K562 (cell line): ENCODE measurements at regions of chr5 and their contacts with region 1.

Region 1: GRCh38 chr5:81971712-81972495 is at the start of gene ATG10:
- DNase-seq: peak; percentile 95 to 96 (median 96)
- ATAC-seq: peak; percentile 97
- H3K4me3 ChIP-seq: peak within 1 kb of the TSS; percentile 63
- H3K27ac ChIP-seq: peak within 1 kb of the TSS; percentile 97
- H3K4me1 ChIP-seq: peaks cover 8 to 10% of the 10 kb centered on the region in 2 experiments; a peak in 4 of 5 replicates
- H3K27me3 ChIP-seq: no peaks in the 10 kb centered on the region
- CTCF ChIP-seq: 0 out of 6 replicates have a peak, but pooled peaks of 1 of the 3 experiments have one; percentile 1
- EP300 ChIP-seq: no peak
- POLR2A ChIP-seq: peak; percentile 94
- RAD21 ChIP-seq: peak; percentile 24 to 33; a peak in 2 of 4 replicates
- polyA plus RNA-seq, gene ATG10: 14.6 to 15.0 TPM

Region 2: DNA sequence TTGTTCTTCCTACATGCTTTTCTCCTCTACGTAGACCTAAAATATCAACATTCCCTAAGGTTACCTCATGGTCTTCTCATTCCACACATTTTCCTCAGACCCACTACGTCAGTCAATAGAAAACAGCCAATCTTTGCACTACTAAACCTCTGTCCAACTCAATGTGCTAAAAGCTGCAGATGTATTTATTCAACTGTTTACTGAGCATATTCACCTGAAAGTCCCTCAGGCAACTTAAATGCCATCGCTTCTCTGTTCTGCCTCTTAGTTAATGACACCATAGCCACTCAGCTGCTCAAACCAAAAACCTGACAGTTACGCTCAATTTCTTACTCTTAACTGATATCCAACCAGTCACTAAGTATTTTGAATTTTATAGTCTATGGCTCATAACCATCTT is 296.1 kb before region 1 on chr5:
- CTCF ChIA-PET with region 1: no interaction called
- POLR2A ChIA-PET with region 1: no interaction called
- in situ Hi-C with region 1: no loop called
- intact Hi-C with region 1: no loop called
- DNase-seq: no peak
- ATAC-seq: no peak
- H3K4me3 ChIP-seq: no peak overlapping the region
- H3K27ac ChIP-seq: no peak overlapping the region
- H3K4me1 ChIP-seq: no peaks in the 10 kb centered on the region
- H3K27me3 ChIP-seq: no peaks in the 10 kb centered on the region
- CTCF ChIP-seq: no peak
- EP300 ChIP-seq: no peak
- POLR2A ChIP-seq: no peak
- RAD21 ChIP-seq: no peak

Region 3: GRCh38 chr5:81909677-81910076 is 62.2 kb before region 1 on chr5:
- CTCF ChIA-PET with region 1: no interaction called
- POLR2A ChIA-PET with region 1: interaction called, 3 read pairs
- in situ Hi-C with region 1: no loop called
- intact Hi-C with region 1: loop called (anchors 5 kb)
- DNase-seq: no peak
- ATAC-seq: no peak
- H3K4me3 ChIP-seq: no peak overlapping the region
- H3K27ac ChIP-seq: no peak overlapping the region
- H3K4me1 ChIP-seq: peaks cover 0 to 14% of the 10 kb centered on the region in 2 experiments; a peak in 4 of 5 replicates
- H3K27me3 ChIP-seq: no peaks in the 10 kb centered on the region
- CTCF ChIP-seq: no peak
- EP300 ChIP-seq: no peak
- POLR2A ChIP-seq: no peak
- RAD21 ChIP-seq: no peak